Heart left ventricle (tissue), 16 donors: ENCODE measurements at regions of chr3 and their contacts with region 1.

Region 1: DNA sequence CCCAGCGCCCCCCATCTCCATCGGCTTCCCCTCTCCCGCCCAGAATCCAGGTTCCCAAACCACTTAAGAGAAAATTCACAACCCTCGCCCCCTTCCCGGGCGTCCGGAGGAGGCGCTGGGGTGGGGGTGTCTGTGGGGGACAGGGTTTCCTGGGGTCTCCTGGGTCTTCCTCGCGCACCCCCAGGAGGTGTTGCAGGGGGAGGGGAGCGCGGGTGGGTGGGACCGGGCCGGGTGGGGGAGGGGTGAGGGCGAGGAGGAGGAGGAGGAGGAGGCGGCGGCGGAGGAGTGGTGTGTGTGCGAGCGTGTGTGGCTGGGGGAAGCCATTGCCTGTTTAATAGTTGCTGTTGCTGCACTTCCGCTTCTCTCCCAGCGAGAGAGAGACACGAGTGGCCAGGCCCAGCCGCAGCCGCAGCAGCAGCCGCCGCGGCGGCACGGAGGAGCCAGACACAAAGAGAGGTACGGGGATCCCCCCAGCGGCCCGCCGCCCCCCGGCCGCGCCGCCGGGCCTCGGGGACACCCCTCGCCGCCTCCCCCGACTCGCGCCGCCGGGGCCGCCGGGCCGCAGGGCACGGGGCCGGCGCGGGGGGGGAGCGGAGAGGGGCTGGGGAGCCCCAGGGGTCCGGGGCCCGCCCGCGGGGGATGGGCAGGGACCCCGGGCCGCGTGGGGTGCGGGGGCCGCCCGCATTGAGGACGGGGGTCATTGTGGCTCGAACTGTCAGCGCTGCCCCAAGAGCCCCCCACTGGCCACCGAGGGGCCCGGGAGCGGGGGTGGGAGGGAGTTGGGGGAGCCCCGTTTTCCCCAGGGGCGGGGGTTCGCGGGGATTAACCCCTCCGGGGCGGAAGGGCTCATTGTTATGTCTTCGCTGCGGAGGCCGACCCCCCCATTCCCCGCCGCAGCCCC is at the start of gene UBE2E1:
- DNase-seq: peak; percentile 81 to 87 (median 86)
- ATAC-seq: peak; percentile 71 to 87 (median 80)
- H3K4me3 ChIP-seq: peak within 1 kb of the TSS; percentile 80 to 100 (median 93)
- H3K27ac ChIP-seq: peak within 1 kb of the TSS; percentile 38 to 95 (median 88)
- H3K4me1 ChIP-seq: peaks cover 0 to 36% (median 28%) of the 10 kb centered on the region in 12 donors
- H3K27me3 ChIP-seq: no peaks in the 10 kb centered on the region
- CTCF ChIP-seq: no peak
- POLR2A ChIP-seq: peak in 1 of 2 donors; percentile 42
- total RNA-seq, gene UBE2E1: 59.1 to 97.1 (median 65.0) TPM

Region 2: GRCh38 chr3:23183734-23184133 is 622.1 kb before region 1 on chr3:
- intact Hi-C with region 1: loop called in 1 of 10 experiments (anchors 10 kb)
- DNase-seq: peak in 2 of 5 donors; percentile 22 to 26
- ATAC-seq: peak in 3 of 4 donors; percentile 69 to 76 (median 72)
- H3K4me3 ChIP-seq: no peak overlapping the region
- H3K27ac ChIP-seq: no peak overlapping the region
- H3K4me1 ChIP-seq: peaks cover 0 to 1% (median 0%) of the 10 kb centered on the region in 12 donors
- H3K27me3 ChIP-seq: no peaks in the 10 kb centered on the region
- CTCF ChIP-seq: peak in 11 of 12 donors; percentile 14 to 59 (median 35)
- POLR2A ChIP-seq: no peak

Region 3: DNA sequence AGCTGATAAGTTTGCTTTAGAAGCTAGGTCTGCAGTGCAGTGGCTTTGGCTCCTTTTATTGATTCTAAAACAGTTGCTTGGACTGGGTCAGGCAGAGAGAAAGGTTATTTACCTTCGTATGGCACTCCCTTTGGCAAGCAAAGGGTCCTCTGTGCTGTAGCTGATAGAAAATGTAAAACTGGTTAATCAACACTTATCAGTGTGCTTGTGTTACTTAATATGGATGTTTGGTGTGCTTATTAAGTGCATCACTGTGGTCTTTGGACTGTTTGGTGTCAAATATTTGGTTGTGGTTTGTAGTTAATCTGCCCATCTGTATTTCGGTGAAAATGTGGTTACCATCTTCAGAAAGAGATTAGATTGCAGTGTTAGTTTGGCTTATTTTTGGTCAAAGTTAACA is 586.8 kb before region 1 on chr3:
- intact Hi-C with region 1: loop called in 1 of 10 experiments (anchors 10 kb)
- DNase-seq: no peak
- ATAC-seq: no peak
- H3K4me3 ChIP-seq: no peak overlapping the region
- H3K27ac ChIP-seq: no peak overlapping the region
- H3K4me1 ChIP-seq: peaks cover 0 to 30% (median 19%) of the 10 kb centered on the region in 12 donors
- H3K27me3 ChIP-seq: no peaks in the 10 kb centered on the region
- CTCF ChIP-seq: no peak
- POLR2A ChIP-seq: no peak

Region 4: DNA sequence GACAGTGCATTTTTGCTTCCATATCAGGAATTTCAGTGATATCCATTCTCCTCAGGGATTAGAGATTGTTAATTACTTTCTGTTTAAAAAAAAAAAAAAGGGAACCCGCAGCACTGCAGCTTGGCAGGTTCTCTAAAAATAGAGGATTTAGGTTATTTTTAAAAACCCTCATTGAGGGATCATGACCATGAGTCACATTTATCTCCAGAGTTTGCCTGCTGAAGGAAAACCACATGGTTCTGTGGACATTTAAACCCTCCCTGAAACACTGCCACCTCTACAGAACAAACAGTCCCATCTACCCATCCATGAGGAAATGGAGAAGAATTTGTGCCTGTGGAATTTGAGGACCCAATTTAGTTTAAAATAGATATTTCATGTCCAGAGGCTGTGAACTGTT is 66.3 kb before region 1 on chr3:
- intact Hi-C with region 1: no loop called
- DNase-seq: no peak
- ATAC-seq: peak in 3 of 4 donors; percentile 53 to 72 (median 53)
- H3K4me3 ChIP-seq: no peak overlapping the region
- H3K27ac ChIP-seq: peak overlapping the region in 2 of 12 donors; percentile 11 to 29
- H3K4me1 ChIP-seq: peaks cover 5 to 39% (median 17%) of the 10 kb centered on the region in 12 donors
- H3K27me3 ChIP-seq: no peaks in the 10 kb centered on the region
- CTCF ChIP-seq: no peak
- POLR2A ChIP-seq: no peak

Region 5: GRCh38 chr3:23751212-23751723 is 54.6 kb before region 1 on chr3:
- intact Hi-C with region 1: loop called in 2 of 10 experiments (anchors 5 to 10 kb)
- DNase-seq: peak in 1 of 5 donors; percentile 36
- ATAC-seq: peak in 3 of 4 donors; percentile 32 to 69 (median 66)
- H3K4me3 ChIP-seq: no peak overlapping the region
- H3K27ac ChIP-seq: peak overlapping the region in 1 of 12 donors; percentile 61
- H3K4me1 ChIP-seq: peaks cover 0 to 40% (median 13%) of the 10 kb centered on the region in 12 donors
- H3K27me3 ChIP-seq: no peaks in the 10 kb centered on the region
- CTCF ChIP-seq: no peak
- POLR2A ChIP-seq: no peak

Region 6: DNA sequence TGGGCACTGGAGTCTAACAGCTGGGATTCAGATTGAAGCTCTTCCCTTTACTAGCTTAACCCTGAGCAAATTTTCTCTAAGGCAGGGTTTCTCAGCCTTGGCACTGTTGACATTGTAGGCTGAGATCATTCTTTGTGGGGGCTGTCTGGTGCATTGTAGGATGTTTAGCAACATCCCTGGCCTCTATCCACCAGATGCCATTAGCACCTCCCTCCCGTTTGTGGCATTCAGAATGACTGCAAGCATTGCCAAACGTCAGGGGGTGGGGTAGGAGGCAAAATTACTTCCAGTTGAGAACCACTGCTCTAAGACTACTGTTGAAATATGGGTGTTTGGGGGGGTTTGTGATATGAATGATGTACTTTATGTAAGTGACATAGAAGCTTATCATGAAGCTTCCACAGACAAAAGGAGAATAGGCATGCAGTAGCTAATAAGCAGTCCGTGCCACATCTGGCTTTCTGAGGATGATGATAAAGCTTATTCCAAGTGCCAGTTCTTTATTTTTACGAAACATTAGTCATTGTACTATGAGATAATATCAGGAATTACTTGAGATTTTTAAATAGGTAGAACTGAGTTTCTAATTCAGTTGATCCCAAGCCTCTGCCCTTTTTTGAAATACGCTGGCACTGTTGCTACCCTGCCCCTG is 71.6 kb after region 1 on chr3:
- intact Hi-C with region 1: no loop called
- DNase-seq: peak in 1 of 5 donors; percentile 58
- ATAC-seq: peak in 3 of 4 donors; percentile 61 to 70 (median 67)
- H3K4me3 ChIP-seq: no peak overlapping the region
- H3K27ac ChIP-seq: no peak overlapping the region
- H3K4me1 ChIP-seq: peaks cover 0 to 57% (median 41%) of the 10 kb centered on the region in 12 donors
- H3K27me3 ChIP-seq: no peaks in the 10 kb centered on the region
- CTCF ChIP-seq: no peak
- POLR2A ChIP-seq: no peak

Region 7: DNA sequence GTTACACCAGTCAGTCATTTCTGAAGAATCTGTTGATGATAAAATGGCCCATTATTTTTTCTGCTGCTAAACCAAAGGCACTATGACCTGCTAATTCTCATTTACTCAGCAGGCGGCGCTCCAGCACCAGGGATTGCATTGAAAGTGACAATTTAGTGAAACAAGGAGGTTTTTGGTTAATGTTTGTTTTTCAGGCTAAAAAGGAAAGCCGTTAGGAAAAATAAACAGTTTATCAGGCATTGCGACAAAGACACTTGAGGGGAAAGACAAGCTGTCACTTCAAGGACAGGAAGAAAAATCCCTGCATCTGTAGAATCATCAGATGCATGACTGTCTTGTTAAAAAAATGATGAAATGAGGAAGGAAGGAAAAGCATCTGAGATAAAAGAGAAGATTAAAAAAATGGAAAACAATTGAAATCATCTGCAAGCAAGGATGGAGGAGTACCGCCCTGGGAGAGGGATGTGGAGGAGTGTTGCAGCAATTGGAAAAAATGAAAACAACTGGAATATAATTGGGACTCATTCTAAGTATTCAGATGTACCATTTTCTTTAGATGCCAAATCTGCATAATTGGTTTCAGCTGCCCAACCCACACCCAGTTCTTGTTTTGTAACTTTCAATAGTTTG is 193.2 kb after region 1 on chr3:
- intact Hi-C with region 1: no loop called
- DNase-seq: peak; percentile 48 to 77 (median 63)
- ATAC-seq: peak in 1 of 4 donors; percentile 30
- H3K4me3 ChIP-seq: no peak overlapping the region
- H3K27ac ChIP-seq: no peak overlapping the region
- H3K4me1 ChIP-seq: peaks cover 0 to 16% (median 7%) of the 10 kb centered on the region in 12 donors
- H3K27me3 ChIP-seq: no peaks in the 10 kb centered on the region
- CTCF ChIP-seq: peak; percentile 64 to 95 (median 88)
- POLR2A ChIP-seq: no peak